ENCODE measurements at regions of chr3 and their contacts with region 1.

Region 1: DNA sequence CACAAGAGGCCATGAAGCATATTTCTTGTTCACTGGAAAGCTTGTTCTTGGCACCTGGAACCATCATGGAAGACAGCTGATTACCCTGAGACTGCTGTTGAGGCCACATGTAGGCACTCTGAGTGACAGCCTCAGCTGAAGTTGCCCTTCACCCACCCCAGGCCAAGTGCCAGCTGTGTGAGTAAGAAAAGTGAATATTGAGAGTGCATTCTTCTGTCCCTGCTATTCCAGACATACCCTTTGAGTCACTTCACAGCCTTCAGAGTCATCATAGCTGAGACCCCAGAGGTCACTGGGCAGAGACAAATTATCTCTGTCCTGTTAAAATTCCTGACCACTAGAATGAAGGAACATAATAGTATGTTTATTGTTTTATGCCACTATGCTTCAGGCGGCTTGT is 79.6 kb downstream of the NFKBIZ start:
- DNase-seq: peak; percentile 95
- ATAC-seq: peak; percentile 41
- H3K4me3 ChIP-seq: no peak overlapping the region
- H3K27ac ChIP-seq: peak overlapping the region; percentile 91
- H3K4me1 ChIP-seq: peaks cover 38% of the 10 kb centered on the region
- H3K27me3 ChIP-seq: no peaks in the 10 kb centered on the region
- CTCF ChIP-seq: no peak

Region 2: GRCh38 chr3:101656651-101657050 is 272.2 kb before region 1 on chr3:
- CTCF ChIA-PET with region 1: no interaction called
- POLR2A ChIA-PET with region 1: no interaction called
- intact Hi-C with region 1: no loop called
- DNase-seq: no peak
- ATAC-seq: no peak
- H3K4me3 ChIP-seq: no peak overlapping the region
- H3K27ac ChIP-seq: no peak overlapping the region
- H3K4me1 ChIP-seq: no peaks in the 10 kb centered on the region
- H3K27me3 ChIP-seq: no peaks in the 10 kb centered on the region
- CTCF ChIP-seq: no peak

Region 3: GRCh38 chr3:101861212-101861788 is 67.6 kb before region 1 on chr3:
- CTCF ChIA-PET with region 1: no interaction called
- POLR2A ChIA-PET with region 1: interaction called, 6 read pairs
- intact Hi-C with region 1: loop called (anchors 1 kb)
- DNase-seq: no peak
- ATAC-seq: no peak
- H3K4me3 ChIP-seq: no peak overlapping the region
- H3K27ac ChIP-seq: peak overlapping the region; percentile 10; the same call in 1 of the 2 replicates
- H3K4me1 ChIP-seq: peaks cover 12% of the 10 kb centered on the region
- H3K27me3 ChIP-seq: no peaks in the 10 kb centered on the region
- CTCF ChIP-seq: no peak

Region 4: GRCh38 chr3:101962055-101962454 is 33.2 kb after region 1 on chr3:
- CTCF ChIA-PET with region 1: no interaction called
- POLR2A ChIA-PET with region 1: interaction called, 21 read pairs
- intact Hi-C with region 1: no loop called
- DNase-seq: no peak
- ATAC-seq: no peak
- H3K4me3 ChIP-seq: no peak overlapping the region
- H3K27ac ChIP-seq: no peak overlapping the region
- H3K4me1 ChIP-seq: peaks cover 15% of the 10 kb centered on the region
- H3K27me3 ChIP-seq: no peaks in the 10 kb centered on the region
- CTCF ChIP-seq: no peak

Region 5: DNA sequence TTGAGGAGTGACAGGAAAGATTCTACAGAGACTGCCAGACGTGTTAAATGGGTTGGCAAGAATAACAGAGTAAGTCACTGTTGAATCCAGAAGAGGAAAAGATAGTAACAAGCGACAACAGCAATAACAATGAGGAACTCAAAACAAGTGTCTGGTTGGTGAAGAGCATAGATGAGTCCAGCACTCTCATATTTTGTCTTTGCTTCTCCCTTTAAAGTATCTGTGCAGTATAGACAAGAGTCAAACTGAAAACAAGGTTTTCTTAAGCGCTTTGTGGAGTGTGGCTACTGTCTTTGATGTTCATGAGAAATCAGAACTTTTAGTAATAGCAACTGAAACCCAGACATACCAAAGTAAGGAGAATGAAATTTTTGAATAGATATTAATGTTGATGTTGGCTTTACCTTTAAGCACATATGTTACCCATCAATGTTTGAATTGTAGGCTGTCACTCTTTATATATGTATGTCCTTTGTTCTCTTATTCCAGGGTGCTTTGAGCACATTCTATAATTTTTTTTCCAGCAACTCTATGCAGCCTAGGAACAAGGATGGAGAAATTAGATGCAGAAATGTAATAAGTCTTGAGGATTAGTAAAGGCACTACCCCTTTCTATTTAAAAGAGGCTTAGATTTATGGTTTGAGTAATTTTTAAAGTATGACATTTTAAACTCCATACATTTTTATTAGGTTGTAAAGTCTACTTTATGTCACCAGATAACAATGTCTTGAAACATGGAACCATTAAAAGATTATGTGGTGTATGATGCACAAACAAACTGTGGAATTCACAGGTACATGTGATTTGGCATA is 106.0 kb after region 1 on chr3:
- CTCF ChIA-PET with region 1: no interaction called
- POLR2A ChIA-PET with region 1: no interaction called
- intact Hi-C with region 1: loop called (anchors 5 kb)
- DNase-seq: peak; percentile 68
- ATAC-seq: peak; percentile 85
- H3K4me3 ChIP-seq: no peak overlapping the region
- H3K27ac ChIP-seq: peak overlapping the region; percentile 60
- H3K4me1 ChIP-seq: peaks cover 15% of the 10 kb centered on the region
- H3K27me3 ChIP-seq: no peaks in the 10 kb centered on the region
- CTCF ChIP-seq: no peak

Region 6: GRCh38 chr3:102136183-102136582 is 207.3 kb after region 1 on chr3:
- CTCF ChIA-PET with region 1: no interaction called
- POLR2A ChIA-PET with region 1: no interaction called
- intact Hi-C with region 1: loop called (anchors 1 kb)
- DNase-seq: peak; percentile 84
- ATAC-seq: peak; percentile 94
- H3K4me3 ChIP-seq: peak overlapping the region; percentile 39; the same call in 1 of the 2 replicates
- H3K27ac ChIP-seq: peak overlapping the region; percentile 94
- H3K4me1 ChIP-seq: peaks cover 18% of the 10 kb centered on the region
- H3K27me3 ChIP-seq: no peaks in the 10 kb centered on the region
- CTCF ChIP-seq: no peak

Measured in PC-3 (cell line).